Dorsolateral prefrontal cortex (tissue), 120 donors: ENCODE measurements at regions of chr19 and their contacts with region 1.

Region 1: DNA sequence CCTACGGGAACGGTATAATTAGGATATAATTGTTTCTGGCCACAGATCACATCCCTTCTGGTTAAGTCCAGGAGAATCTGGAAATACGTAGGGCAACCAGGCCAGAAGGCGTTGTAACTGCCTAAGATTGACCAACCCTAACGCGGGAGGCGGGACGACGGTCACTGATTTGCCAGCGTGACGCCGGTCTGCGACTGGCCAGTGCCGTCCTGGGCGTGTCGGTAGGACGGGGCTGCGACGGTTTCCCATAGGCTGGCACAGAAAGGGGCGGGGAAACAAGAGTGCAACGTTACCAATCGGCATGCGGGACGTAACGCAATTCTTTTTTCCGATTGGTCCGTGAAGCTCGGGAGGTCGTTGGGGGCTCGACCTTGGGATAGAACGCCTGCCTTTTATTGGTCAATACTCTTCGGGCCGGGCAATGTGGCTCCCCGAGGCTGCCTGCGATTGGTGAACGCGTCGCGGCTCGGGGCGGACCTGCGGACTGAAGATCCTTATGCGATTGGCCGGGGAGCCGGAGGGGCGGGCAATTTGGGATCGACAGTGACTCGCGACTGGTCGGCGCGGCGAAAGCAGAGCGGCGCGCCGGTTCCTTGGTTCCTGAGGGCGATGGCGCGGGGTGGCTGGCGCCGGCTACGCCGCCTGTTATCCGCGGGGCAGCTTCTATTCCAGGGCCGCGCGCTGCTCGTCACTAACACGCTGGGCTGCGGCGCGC is at the start of gene MPV17L2:
- DNase-seq: peak; percentile 100
- H3K4me3 ChIP-seq: peak within 1 kb of the TSS; percentile 71 to 98 (median 87)
- H3K27ac ChIP-seq: peak within 1 kb of the TSS; percentile 72 to 99 (median 95)
- H3K27me3 ChIP-seq: no peaks in the 10 kb centered on the region
- CTCF ChIP-seq: peak in 15 of 56 donors; percentile 5 to 45 (median 11)
- total RNA-seq, gene MPV17L2: 3.8 to 12.2 (median 7.5) TPM

Region 2: DNA sequence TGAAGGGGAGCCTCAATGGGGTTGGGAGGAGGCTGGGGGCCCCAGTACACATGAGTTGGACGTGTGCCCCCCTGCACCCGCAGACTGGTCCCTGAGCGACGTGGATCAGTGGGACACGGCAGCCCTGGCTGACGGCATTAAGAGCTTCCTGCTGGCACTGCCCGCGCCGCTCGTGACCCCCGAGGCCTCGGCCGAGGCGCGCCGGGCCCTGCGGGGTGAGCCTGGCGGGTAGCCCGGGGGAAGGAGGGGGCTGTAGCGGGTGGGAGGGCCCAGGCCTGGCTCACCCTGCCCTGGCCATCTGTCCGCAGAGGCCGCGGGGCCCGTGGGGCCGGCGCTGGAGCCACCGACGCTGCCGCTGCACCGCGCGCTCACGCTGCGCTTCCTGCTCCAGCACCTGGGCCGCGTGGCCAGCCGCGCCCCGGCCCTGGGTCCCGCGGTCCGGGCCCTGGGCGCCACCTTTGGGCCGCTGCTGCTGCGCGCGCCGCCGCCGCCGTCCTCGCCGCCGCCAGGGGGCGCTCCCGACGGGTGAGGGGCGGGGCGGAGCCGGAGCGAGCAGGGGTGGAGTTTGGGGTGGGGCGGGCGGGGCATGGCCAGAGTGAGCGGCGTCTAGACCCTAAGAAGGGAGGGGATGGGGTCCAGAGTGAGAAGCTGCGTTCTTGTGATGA is 31.7 kb before region 1 on chr19:
- intact Hi-C with region 1: loop called in 1 of 2 experiments (anchors 5 kb)
- DNase-seq: peak in 6 of 10 donors; percentile 63 to 88 (median 68)
- H3K4me3 ChIP-seq: peak overlapping the region; percentile 22 to 67 (median 50)
- H3K27ac ChIP-seq: peak overlapping the region in 58 of 59 donors; percentile 29 to 95 (median 84)
- H3K27me3 ChIP-seq: no peaks in the 10 kb centered on the region
- CTCF ChIP-seq: peak in 53 of 56 donors; percentile 22 to 89 (median 62)

Region 3: DNA sequence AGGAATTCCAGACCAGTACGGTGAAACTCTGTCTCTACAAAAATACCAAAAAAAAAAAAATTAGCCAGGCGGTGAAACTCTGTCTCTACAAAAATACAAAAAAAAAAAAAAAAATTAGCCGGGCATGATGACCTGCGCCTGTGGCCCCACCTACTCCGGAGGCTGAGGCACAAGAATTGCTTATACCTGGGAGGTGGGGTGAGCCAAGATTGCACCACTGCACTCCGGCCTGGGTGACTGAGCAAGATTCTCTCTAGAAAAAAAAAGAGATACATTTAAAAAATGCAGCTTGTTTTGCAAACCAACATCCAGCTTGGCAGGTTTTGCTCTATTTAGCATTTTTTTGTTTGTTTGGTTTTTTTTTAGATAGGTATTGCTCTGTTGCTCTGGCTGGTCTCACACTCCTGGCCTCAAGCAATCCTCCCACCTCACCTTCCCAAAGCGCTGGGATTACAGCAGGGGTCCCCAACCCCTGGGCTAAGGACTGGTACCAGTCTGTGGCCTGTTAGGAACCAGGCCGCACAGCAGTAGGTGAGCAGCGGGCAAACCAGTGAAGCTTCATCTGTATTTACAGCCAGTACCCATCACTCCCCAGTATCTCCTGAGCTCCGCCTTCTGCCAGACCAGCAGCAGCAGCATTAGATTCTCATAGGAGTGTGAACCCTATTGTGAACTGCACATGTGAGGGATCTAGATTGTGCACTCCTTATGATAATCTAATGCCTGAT is 141.0 kb after region 1 on chr19:
- intact Hi-C with region 1: loop called in 1 of 2 experiments (anchors 5 kb)
- DNase-seq: no peak
- H3K4me3 ChIP-seq: no peak overlapping the region
- H3K27ac ChIP-seq: no peak overlapping the region
- H3K27me3 ChIP-seq: no peaks in the 10 kb centered on the region
- CTCF ChIP-seq: no peak